ENCODE measurements at regions of chr11 and their contacts with region 1.

Region 1: GRCh38 chr11:90187839-90188238 is 35.0 kb downstream of the CHORDC1 start:
- DNase-seq: no peak
- H3K4me3 ChIP-seq: no peak overlapping the region
- H3K4me3 Mint-ChIP-seq: no peak overlapping the region
- H3K27ac ChIP-seq: no peak overlapping the region
- H3K27ac Mint-ChIP-seq: peak overlapping the region in 1 of 8 donors; percentile 87
- H3K4me1 ChIP-seq: no peaks in the 10 kb centered on the region
- H3K4me1 Mint-ChIP-seq: peaks cover 0 to 4% (median 0%) of the 10 kb centered on the region in 3 donors
- H3K27me3 ChIP-seq: no peaks in the 10 kb centered on the region
- H3K27me3 Mint-ChIP-seq: no peaks in the 10 kb centered on the region

Region 2: DNA sequence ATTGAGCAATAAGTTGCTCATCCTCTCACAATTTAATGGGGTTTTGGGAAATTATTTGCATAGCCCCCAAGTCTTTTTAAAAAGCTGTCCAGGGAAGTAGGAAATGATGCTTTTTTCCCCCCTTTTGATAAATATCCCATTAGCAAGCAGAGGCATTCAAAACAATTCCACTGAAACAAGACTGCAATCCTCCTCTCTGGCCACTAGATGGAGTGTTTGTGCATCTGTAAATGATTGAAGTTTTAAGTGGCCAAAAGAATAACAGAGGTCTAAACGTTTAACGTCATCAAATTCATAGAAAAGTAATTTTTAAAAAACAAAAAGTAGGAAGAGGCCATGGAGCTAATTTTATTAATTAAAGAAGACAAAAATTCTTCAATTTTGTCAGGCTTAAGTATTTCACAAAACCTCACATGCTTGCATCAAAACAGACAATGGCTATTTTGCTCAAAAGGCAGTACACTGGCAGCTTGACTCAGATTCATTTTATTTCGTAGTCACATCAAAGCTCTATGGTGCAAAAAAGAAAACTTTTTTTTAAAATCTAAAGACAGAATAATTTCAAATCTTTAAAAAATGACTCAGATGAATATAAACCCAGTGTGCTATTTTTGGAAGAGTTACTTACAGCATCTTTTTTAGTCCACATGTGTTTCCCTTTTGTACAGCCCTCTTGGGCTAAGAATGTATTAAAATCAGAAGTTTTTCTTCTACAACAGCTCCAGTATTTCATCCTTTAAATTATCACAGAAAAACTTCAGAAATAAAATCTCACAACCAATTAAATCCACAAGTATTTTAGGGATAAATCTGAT is 17.2 kb after region 1 on chr11:
- CTCF ChIA-PET with region 1: interaction called, 11 read pairs
- POLR2A ChIA-PET with region 1: no interaction called
- DNase-seq: peak in 2 of 5 donors; percentile 34 to 48
- H3K4me3 ChIP-seq: no peak overlapping the region
- H3K4me3 Mint-ChIP-seq: no peak overlapping the region
- H3K27ac ChIP-seq: no peak overlapping the region
- H3K27ac Mint-ChIP-seq: peak overlapping the region in 6 of 8 donors; percentile 11 to 86 (median 58)
- H3K4me1 ChIP-seq: peaks cover 4% of the 10 kb centered on the region
- H3K4me1 Mint-ChIP-seq: peaks cover 19 to 36% (median 23%) of the 10 kb centered on the region in 3 donors
- H3K27me3 ChIP-seq: no peaks in the 10 kb centered on the region
- H3K27me3 Mint-ChIP-seq: no peaks in the 10 kb centered on the region

Region 3: DNA sequence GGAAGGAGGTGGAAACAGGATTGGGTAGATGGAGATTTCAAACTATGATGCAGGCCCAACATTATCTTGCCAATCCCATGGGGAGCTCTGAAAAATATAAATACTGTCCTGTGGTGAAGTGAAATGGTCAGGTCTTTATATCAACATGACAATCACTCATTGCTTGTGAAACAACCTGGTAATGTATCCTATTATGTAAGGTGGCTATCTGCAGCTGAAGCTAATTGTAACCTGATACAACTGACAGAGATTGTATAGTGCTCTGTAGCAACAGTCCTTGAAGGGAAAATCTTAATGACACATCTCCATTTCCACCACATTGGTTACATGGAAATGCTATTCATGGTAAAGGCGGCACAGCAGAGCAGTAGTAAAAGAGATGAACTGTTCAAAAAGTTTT is 55.7 kb after region 1 on chr11:
- CTCF ChIA-PET with region 1: no interaction called
- POLR2A ChIA-PET with region 1: no interaction called
- DNase-seq: no peak
- H3K4me3 ChIP-seq: no peak overlapping the region
- H3K4me3 Mint-ChIP-seq: no peak overlapping the region
- H3K27ac ChIP-seq: no peak overlapping the region
- H3K27ac Mint-ChIP-seq: no peak overlapping the region
- H3K4me1 ChIP-seq: no peaks in the 10 kb centered on the region
- H3K4me1 Mint-ChIP-seq: peaks cover 0 to 6% (median 4%) of the 10 kb centered on the region in 3 donors
- H3K27me3 ChIP-seq: no peaks in the 10 kb centered on the region
- H3K27me3 Mint-ChIP-seq: peaks cover 10 to 46% of the 10 kb centered on the region in 2 donors

Measured in CD8-positive, alpha-beta memory T cell (primary cell).